IMR-90 (cell line): ENCODE measurements at regions of chr5 and their contacts with region 1.

Region 1: DNA sequence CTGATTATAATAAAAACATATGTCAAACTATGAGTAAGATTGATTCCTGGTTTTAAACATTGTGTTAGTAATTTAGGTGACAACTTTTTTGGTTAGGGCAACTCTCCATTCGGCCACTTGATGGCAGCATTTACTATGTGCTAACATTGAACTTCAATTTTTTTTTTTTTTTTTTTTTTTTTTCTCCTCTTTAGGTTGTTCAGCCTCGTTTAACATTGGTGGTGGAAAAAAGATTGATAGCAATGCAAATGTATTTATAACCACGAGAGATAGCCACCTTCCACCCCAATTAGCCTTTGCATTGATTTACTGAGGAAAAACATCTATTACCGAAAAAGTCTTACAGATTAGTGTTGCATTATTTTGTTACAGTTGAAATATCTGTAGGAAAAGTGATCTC is 159.1 kb downstream of the CSNK1G3 start:
- DNase-seq: peak; percentile 30
- ATAC-seq: no peak; the same call in 1 of the 2 replicates
- H3K4me3 ChIP-seq: no peak overlapping the region
- H3K27ac ChIP-seq: no peak overlapping the region
- H3K4me1 ChIP-seq: peaks cover 4% of the 10 kb centered on the region
- H3K27me3 ChIP-seq: no peaks in the 10 kb centered on the region
- CTCF ChIP-seq: peak; percentile 85
- POLR2A ChIP-seq: 0 out of 2 replicates have a peak, but pooled peaks have one; percentile 35
- RAD21 ChIP-seq: peak; percentile 93

Region 2: DNA sequence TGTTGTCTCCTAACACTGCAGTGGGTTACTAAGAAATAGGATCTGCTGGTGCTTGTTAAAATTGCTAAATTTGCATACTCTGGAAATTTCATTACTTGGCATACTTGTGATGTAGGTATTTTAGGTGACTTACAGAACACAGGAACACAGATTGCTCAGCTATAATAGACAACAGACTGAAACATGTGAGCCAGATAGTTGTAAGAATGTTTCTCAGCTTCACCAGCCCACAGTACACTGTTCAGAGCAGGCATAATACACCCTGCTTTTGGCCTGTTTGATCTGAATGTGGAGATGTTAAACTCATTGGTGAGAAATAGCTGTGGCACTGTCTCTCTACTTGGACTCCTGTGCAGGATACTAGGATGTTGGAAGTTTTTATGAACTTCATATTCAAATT is 116.6 kb after region 1 on chr5:
- CTCF ChIA-PET with region 1: no interaction called
- POLR2A ChIA-PET with region 1: no interaction called
- dilution Hi-C with region 1: no loop called
- in situ Hi-C with region 1: no loop called
- intact Hi-C with region 1: no loop called
- DNase-seq: no peak
- ATAC-seq: no peak
- H3K4me3 ChIP-seq: no peak overlapping the region
- H3K27ac ChIP-seq: no peak overlapping the region
- H3K4me1 ChIP-seq: 0 out of 2 replicates have a peak, but pooled peaks cover 2% of the 10 kb centered on the region
- H3K27me3 ChIP-seq: no peaks in the 10 kb centered on the region; the same call in 1 of the 2 replicates
- CTCF ChIP-seq: no peak
- POLR2A ChIP-seq: no peak
- RAD21 ChIP-seq: no peak

Region 3: GRCh38 chr5:123937230-123937629 is 266.2 kb after region 1 on chr5:
- CTCF ChIA-PET with region 1: no interaction called
- POLR2A ChIA-PET with region 1: no interaction called
- dilution Hi-C with region 1: no loop called
- in situ Hi-C with region 1: no loop called
- intact Hi-C with region 1: loop called (anchors 2 kb)
- DNase-seq: peak; percentile 67
- ATAC-seq: no peak
- H3K4me3 ChIP-seq: no peak overlapping the region
- H3K27ac ChIP-seq: no peak overlapping the region
- H3K4me1 ChIP-seq: no peaks in the 10 kb centered on the region
- H3K27me3 ChIP-seq: no peaks in the 10 kb centered on the region
- CTCF ChIP-seq: peak; percentile 62
- POLR2A ChIP-seq: no peak
- RAD21 ChIP-seq: peak; percentile 81

Region 4: DNA sequence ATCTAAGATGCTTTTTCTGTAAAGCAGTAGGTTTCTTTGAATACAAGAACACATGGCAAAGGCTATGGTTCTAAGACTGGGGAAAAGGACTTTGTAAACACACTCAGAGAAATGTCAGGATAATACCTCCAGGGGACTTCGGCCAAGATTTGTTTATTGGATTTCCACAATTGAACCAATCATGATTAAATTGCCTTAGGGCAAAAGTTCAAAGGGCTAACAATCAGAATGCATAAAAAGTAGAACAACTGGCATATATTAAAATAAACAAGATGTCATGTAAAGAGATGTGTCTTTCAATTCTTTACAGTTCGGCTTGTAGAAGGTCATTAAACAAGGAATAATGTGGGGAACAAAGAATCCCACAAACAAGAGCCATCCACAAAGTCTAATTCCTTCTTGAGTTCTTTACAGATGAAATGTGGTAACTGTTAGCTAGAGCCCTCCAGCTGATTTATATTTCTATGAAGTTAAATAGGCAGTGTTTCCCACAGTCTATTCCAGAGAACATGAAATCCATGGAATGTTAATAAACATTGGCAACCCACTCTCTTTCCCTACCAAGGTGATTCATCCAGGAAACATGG is 509.9 kb after region 1 on chr5:
- CTCF ChIA-PET with region 1: no interaction called
- POLR2A ChIA-PET with region 1: no interaction called
- dilution Hi-C with region 1: no loop called
- in situ Hi-C with region 1: no loop called
- intact Hi-C with region 1: loop called (anchors 5 kb)
- DNase-seq: peak; percentile 21
- ATAC-seq: no peak; the same call in 1 of the 2 replicates
- H3K4me3 ChIP-seq: no peak overlapping the region
- H3K27ac ChIP-seq: no peak overlapping the region
- H3K4me1 ChIP-seq: peaks cover 2% of the 10 kb centered on the region; the same call in 1 of the 2 replicates
- H3K27me3 ChIP-seq: no peaks in the 10 kb centered on the region
- CTCF ChIP-seq: no peak
- POLR2A ChIP-seq: no peak
- RAD21 ChIP-seq: no peak

Region 5: GRCh38 chr5:124343451-124343867 is 672.4 kb after region 1 on chr5:
- CTCF ChIA-PET with region 1: no interaction called
- POLR2A ChIA-PET with region 1: no interaction called
- dilution Hi-C with region 1: no loop called
- in situ Hi-C with region 1: no loop called
- intact Hi-C with region 1: loop called (anchors 5 kb)
- DNase-seq: peak; percentile 95
- ATAC-seq: peak; percentile 98
- H3K4me3 ChIP-seq: no peak overlapping the region
- H3K27ac ChIP-seq: no peak overlapping the region
- H3K4me1 ChIP-seq: 0 out of 2 replicates have a peak, but pooled peaks cover 2% of the 10 kb centered on the region
- H3K27me3 ChIP-seq: peaks cover 3% of the 10 kb centered on the region; the same call in 1 of the 2 replicates
- CTCF ChIP-seq: no peak
- POLR2A ChIP-seq: no peak
- RAD21 ChIP-seq: peak; percentile 16

Region 6: DNA sequence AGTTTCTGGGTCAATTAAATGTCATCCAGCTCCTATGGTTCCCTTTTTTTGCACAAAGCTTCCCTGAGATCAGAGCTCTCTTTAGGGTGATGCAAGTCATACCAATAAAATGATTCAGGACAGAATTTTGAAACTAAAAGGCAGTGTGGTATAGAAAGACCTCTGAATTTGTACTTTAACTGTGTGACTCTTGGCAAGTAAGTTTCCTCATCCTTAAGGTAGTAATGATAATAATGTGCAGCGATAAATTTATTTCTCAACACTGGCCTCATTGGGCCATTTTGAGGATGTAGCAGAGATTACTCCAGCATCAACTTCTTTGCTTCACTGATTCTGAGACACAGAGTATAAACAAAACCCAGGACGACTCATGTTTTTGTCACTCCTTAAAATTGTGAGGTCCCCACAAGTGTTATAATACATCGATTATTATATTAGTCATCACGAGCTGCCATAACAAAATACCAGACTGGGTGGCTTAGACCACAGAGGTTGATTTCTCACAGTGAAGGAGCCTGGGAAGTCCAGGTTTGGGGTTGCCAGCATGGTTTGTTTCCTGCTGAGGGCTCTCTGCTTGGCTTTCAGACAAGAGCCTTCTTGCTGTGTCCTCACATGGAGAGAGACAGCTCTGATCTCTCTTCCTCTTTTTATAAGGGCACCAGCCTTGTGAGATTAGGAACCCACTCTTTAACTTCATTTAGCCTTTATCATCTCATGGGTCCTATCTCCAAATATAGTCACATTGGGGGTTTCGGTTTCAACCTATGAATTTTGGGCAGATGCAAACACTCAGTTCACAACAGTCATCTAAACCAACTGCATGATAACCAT is 782.4 kb after region 1 on chr5:
- CTCF ChIA-PET with region 1: no interaction called
- POLR2A ChIA-PET with region 1: interaction called, 3 read pairs
- dilution Hi-C with region 1: no loop called
- in situ Hi-C with region 1: no loop called
- intact Hi-C with region 1: loop called (anchors 1 kb)
- DNase-seq: peak; percentile 89
- ATAC-seq: peak; percentile 60
- H3K4me3 ChIP-seq: no peak overlapping the region
- H3K27ac ChIP-seq: 0 out of 2 replicates have a peak overlapping the region, but pooled peaks have one; percentile 34
- H3K4me1 ChIP-seq: peaks cover 16% of the 10 kb centered on the region
- H3K27me3 ChIP-seq: peaks cover 5% of the 10 kb centered on the region
- CTCF ChIP-seq: no peak
- POLR2A ChIP-seq: no peak
- RAD21 ChIP-seq: no peak

Region 7: GRCh38 chr5:124630767-124631704 is 960.0 kb after region 1 on chr5:
- CTCF ChIA-PET with region 1: no interaction called
- POLR2A ChIA-PET with region 1: no interaction called
- dilution Hi-C with region 1: no loop called
- in situ Hi-C with region 1: no loop called
- intact Hi-C with region 1: loop called (anchors 5 kb)
- DNase-seq: peak; percentile 65
- ATAC-seq: no peak
- H3K4me3 ChIP-seq: no peak overlapping the region
- H3K27ac ChIP-seq: peak overlapping the region; percentile 48; the same call in 1 of the 2 replicates
- H3K4me1 ChIP-seq: peaks cover 35% of the 10 kb centered on the region
- H3K27me3 ChIP-seq: no peaks in the 10 kb centered on the region
- CTCF ChIP-seq: no peak
- POLR2A ChIP-seq: no peak
- RAD21 ChIP-seq: no peak

Region 8: DNA sequence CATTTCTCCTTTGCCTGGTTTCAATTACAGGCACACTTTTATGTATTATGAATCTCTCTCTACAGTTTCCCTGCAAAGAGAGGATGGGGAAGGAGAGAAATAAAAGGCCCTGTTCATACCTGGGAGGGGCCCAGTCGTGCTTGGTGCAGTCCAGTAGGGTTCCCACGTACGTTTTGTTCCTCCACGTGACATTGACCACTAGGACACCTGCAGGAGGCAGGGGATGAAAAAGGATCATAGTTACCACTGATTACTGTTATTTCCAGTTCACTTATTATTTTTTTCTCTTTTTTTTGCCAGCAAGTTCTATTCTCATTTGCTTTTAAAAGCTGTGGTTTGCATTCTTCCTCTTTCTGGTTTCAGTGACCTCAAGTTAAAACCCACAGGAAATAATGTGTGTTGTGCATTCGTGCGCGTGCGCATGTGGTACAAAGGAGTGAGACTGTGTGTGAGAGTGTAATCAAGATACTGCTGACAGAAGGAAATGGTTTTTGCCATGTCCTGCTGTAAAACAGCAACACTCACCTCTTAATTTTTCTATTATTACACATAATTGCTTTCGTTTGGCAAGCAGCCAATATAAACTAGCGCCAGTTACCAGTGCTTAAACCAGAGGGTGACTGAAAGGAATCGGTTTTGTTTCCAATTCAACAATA is 978.6 kb after region 1 on chr5:
- CTCF ChIA-PET with region 1: no interaction called
- POLR2A ChIA-PET with region 1: no interaction called
- dilution Hi-C with region 1: no loop called
- in situ Hi-C with region 1: no loop called
- intact Hi-C with region 1: loop called (anchors 2 kb)
- DNase-seq: peak; percentile 93
- ATAC-seq: peak; percentile 23; the same call in 1 of the 2 replicates
- H3K4me3 ChIP-seq: no peak overlapping the region
- H3K27ac ChIP-seq: peak overlapping the region; percentile 85
- H3K4me1 ChIP-seq: peaks cover 23% of the 10 kb centered on the region
- H3K27me3 ChIP-seq: no peaks in the 10 kb centered on the region
- CTCF ChIP-seq: no peak
- POLR2A ChIP-seq: no peak
- RAD21 ChIP-seq: 0 out of 2 replicates have a peak, but pooled peaks have one; percentile 8